Activated CD4-positive, alpha-beta T cell treated with anti-CD3 and anti-CD28 coated beads, Interleukin-2, amount 10 ng/mL, durations not matched to agents 24 days and 14 days (primary cell): ENCODE measurements at regions of chr5 and their contacts with region 1.

Region 1: GRCh38 chr5:103258368-103258956 is at the start of gene MACIR:
- DNase-seq: peak; percentile 98
- H3K4me3 Mint-ChIP-seq: peak within 1 kb of the TSS; percentile 88
- H3K27ac Mint-ChIP-seq: peak within 1 kb of the TSS; percentile 87
- H3K4me1 Mint-ChIP-seq: peaks cover 23% of the 10 kb centered on the region
- H3K27me3 Mint-ChIP-seq: peaks cover 14% of the 10 kb centered on the region
- total RNA-seq, gene MACIR: 12.1 and 13.3 TPM in 2 replicates

Region 2: GRCh38 chr5:102762095-102762534 is 496.3 kb before region 1 on chr5:
- intact Hi-C with region 1: loop called (anchors 5 kb)
- DNase-seq: peak; percentile 69
- H3K4me3 Mint-ChIP-seq: peak overlapping the region; percentile 82
- H3K27ac Mint-ChIP-seq: peak overlapping the region; percentile 90
- H3K4me1 Mint-ChIP-seq: peaks cover 68% of the 10 kb centered on the region
- H3K27me3 Mint-ChIP-seq: no peaks in the 10 kb centered on the region

Region 3: GRCh38 chr5:103211576-103212561 is 46.6 kb before region 1 on chr5:
- intact Hi-C with region 1: loop called (anchors 5 kb)
- DNase-seq: peak; percentile 60
- H3K4me3 Mint-ChIP-seq: peak overlapping the region; percentile 53
- H3K27ac Mint-ChIP-seq: peak overlapping the region; percentile 54
- H3K4me1 Mint-ChIP-seq: peaks cover 30% of the 10 kb centered on the region
- H3K27me3 Mint-ChIP-seq: no peaks in the 10 kb centered on the region

Region 4: GRCh38 chr5:103340717-103341388 is 82.4 kb after region 1 on chr5:
- intact Hi-C with region 1: loop called (anchors 2 kb)
- DNase-seq: peak; percentile 68
- H3K4me3 Mint-ChIP-seq: no peak overlapping the region
- H3K27ac Mint-ChIP-seq: no peak overlapping the region
- H3K4me1 Mint-ChIP-seq: peaks cover 6% of the 10 kb centered on the region
- H3K27me3 Mint-ChIP-seq: peaks cover 6% of the 10 kb centered on the region

Region 5: GRCh38 chr5:103356350-103357091 is 98.1 kb after region 1 on chr5:
- intact Hi-C with region 1: loop called (anchors 5 kb)
- DNase-seq: no peak
- H3K4me3 Mint-ChIP-seq: no peak overlapping the region
- H3K27ac Mint-ChIP-seq: peak overlapping the region; percentile 81
- H3K4me1 Mint-ChIP-seq: peaks cover 8% of the 10 kb centered on the region
- H3K27me3 Mint-ChIP-seq: peaks cover 8% of the 10 kb centered on the region

Region 6: DNA sequence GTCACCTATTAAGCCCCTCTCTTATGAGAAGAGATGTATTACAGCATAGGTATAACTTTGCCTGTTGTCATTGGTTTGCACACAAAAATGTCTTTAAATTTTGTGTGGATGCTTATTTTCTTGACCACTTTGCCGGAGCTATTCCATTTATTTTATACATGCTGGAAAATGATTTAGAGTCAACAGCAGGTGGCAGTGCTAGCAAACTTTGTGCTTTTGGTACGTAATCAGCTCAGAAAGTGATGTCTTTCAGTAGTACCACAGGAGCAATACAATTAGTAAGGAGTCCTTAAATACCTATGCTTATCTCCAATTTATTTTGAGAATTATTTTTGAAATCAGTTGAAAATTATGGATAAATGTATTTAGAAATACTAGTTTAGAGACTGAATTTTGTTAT is 323.9 kb after region 1 on chr5:
- intact Hi-C with region 1: no loop called
- DNase-seq: no peak
- H3K4me3 Mint-ChIP-seq: no peak overlapping the region
- H3K27ac Mint-ChIP-seq: no peak overlapping the region
- H3K4me1 Mint-ChIP-seq: no peaks in the 10 kb centered on the region
- H3K27me3 Mint-ChIP-seq: peaks cover 3% of the 10 kb centered on the region